A549 (cell line): ENCODE measurements at regions of chr17 and their contacts with region 1.

Region 1: DNA sequence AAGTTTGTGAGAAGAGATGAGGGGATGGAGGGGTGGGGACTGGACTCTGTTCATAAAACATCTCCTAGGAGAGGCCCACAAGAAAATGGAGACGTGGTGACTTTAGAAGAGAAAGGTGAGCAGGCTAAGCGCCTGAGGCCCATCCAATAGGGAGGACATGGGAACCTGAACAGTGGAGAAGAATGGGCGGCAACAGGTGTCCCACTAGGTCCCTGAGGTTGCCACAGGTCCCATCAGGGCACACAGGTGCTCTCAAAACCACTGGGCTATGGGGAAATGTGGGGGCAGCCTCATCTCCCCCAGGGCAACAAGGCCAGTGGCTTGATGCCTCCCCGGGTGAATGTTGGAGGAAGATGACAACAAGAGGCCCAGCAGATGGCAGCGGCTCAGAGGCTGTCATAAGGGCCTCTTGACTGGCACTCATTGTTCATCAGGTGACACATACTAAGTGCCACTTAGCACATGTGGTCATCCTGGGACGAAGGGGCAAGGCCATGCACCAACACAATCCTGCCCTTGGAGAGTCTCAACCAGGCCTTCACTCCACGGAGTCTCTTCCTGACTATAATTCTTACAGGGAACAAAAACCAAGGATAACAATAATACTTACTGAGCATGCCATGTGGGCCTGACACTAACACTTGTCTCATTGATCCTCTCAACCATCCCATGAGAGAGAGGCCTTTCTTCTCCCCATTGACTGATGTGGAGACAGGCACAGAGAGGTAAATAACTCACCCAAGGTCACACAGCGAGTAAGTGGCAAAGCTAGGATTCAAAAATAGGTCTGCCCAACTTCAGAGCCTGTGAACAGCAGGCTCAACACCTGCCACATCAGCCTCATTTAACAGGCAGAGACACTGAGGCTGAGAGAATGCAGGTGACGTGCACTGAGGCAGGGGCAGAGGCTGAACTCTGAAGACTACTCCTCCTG is 38.0 kb downstream of the CUEDC1 start:
- DNase-seq: peak in 1 of 2 experiments; percentile 63
- ATAC-seq: peak; percentile 25 to 53; a peak in 4 of 6 replicates
- H3K4me3 ChIP-seq: no peak overlapping the region
- H3K27ac ChIP-seq: peak overlapping the region; percentile 56 to 74
- H3K4me1 ChIP-seq: peaks cover 76% of the 10 kb centered on the region
- CTCF ChIP-seq: peak; percentile 28
- EP300 ChIP-seq: no peak
- POLR2A ChIP-seq: no peak
- RAD21 ChIP-seq: peak; percentile 35 to 55; a peak in 3 of 5 replicates

Region 2: GRCh38 chr17:57819285-57819684 is 97.9 kb before region 1 on chr17:
- CTCF ChIA-PET with region 1: no interaction called
- POLR2A ChIA-PET with region 1: no interaction called
- DNase-seq: no peak
- ATAC-seq: no peak
- H3K4me3 ChIP-seq: no peak overlapping the region
- H3K27ac ChIP-seq: peak overlapping the region in 1 of 2 experiments; percentile 6; a peak in 1 of 6 replicates
- H3K4me1 ChIP-seq: peaks cover 6% of the 10 kb centered on the region; the same call in 2 of the 3 replicates
- CTCF ChIP-seq: no peak
- EP300 ChIP-seq: no peak
- POLR2A ChIP-seq: no peak
- RAD21 ChIP-seq: no peak

Region 3: DNA sequence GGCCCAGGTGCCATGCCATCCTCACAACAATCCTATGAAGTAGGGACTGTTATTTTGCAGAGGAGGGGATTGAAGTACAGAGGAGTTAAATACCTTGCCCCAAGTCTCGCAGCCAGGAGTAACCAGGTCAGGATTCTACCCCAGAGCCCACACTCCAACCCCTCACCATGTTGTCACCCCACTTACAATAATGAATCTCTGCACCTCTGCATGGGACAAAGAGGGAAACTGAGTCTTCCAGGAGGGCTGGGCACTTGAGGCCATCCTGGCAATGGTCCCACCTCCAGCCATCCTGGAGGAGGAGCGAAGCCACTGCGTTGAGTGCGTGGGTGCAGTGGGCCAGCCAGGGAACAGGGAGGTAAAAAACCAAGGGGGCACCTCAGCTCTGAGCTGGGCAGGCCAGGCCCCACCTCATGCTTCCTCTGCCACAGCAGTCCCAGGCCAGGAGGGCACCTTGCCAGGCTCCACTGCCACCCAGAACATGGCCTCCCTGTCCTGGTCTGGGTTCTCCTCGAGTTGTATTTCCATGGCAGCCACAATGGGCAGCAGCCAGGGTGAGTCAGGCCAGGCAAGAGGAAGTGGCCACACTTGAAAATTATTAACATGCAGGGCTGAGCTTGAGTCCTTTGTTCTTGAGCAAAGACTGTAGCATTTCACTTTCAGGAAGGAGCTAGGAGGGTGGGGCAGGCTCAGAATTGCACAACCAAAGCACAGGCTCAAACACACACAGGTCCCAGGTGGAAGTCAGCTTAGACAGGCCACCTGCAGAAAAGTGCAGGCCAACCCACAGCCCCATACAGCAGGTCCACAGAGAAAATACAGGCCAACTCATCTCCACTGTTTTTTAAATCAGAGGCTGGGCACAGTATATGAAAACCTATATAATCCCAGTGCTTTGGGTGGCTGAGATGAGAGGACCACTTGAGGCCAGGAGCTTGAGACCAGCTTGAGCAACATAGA is 14.1 kb before region 1 on chr17:
- CTCF ChIA-PET with region 1: interaction called, 12 read pairs
- POLR2A ChIA-PET with region 1: interaction called, 3 read pairs
- DNase-seq: peak; percentile 95 to 99
- ATAC-seq: peak; percentile 85 to 87
- H3K4me3 ChIP-seq: no peak overlapping the region
- H3K27ac ChIP-seq: peak overlapping the region; percentile 94 to 97
- H3K4me1 ChIP-seq: peaks cover 82% of the 10 kb centered on the region
- CTCF ChIP-seq: no peak
- EP300 ChIP-seq: peak; percentile 36 to 72; a peak in 2 of 5 replicates
- POLR2A ChIP-seq: no peak
- RAD21 ChIP-seq: peak; percentile 41 to 53

Region 4: DNA sequence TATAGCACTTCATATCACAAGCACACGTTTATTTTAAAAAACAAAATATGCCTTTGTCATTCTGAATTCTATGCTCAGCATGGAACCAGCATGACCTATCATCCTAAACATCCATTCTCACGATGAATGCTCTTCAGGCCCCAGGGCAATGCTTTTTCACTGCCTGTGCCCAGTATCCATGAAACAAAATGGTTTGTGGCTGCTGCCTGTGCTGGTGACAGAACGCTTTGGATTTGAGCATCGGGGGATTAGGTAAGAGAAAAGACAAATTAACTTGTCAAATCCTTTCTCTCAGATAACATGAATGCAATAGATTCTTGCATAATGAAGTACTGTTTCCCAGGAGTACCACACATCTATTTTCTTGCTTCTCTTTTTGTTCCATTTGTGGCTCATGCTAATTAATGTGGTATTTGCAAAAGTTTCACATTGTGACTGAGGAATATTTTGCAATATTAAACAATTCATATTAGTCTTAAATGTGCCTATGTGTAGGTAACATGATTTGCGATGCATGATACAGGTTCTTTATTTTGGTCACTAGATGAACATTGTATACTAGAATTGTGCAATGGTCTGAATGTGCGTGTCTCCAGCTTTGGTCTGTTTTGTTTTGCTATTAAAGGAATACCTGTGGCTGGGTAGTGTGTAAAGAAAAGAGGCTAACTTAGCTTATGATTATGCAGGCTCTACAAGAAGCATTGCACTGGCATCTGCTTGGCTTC is 115.7 kb after region 1 on chr17:
- CTCF ChIA-PET with region 1: no interaction called
- POLR2A ChIA-PET with region 1: no interaction called
- DNase-seq: no peak
- ATAC-seq: no peak
- H3K4me3 ChIP-seq: no peak overlapping the region
- H3K27ac ChIP-seq: no peak overlapping the region
- H3K4me1 ChIP-seq: no peaks in the 10 kb centered on the region
- CTCF ChIP-seq: no peak
- EP300 ChIP-seq: no peak
- POLR2A ChIP-seq: no peak
- RAD21 ChIP-seq: no peak